ENCODE measurements at regions of chr11 and their contacts with region 1.

Region 1: DNA sequence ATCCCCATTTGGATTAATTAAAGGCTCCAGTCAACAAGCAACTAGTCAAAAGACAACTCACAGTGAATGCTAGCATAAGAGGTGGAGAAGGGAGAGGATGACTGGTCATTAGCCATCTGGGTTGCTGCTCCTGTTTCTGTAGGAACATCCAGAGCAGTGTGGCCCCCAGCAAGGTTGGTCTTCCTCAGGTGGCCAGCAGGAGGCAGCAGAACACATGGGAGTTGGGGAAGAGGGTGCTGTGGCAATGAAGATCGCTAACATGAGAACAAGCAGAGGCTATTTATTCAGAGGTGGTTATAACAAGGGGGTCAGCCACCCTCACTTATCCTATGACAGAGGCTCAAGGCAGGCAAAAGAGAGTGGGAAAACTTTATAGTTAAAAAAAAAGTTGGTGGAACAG is 21.3 kb downstream of the IZUMO1R start:
- DNase-seq: peak; percentile 60 to 65 (median 64)
- ATAC-seq: peak; percentile 95
- H3K4me3 ChIP-seq: no peak overlapping the region
- H3K27ac ChIP-seq: no peak overlapping the region
- H3K4me1 ChIP-seq: no peaks in the 10 kb centered on the region
- H3K27me3 ChIP-seq: peaks cover 4 to 7% of the 10 kb centered on the region in 2 experiments; a peak in 3 of 5 replicates
- CTCF ChIP-seq: peak; percentile 79 to 84 (median 80)
- EP300 ChIP-seq: no peak
- POLR2A ChIP-seq: no peak
- RAD21 ChIP-seq: peak; percentile 83 to 87

Region 2: GRCh38 chr11:93895106-93895862 is 430.4 kb before region 1 on chr11:
- CTCF ChIA-PET with region 1: no interaction called
- POLR2A ChIA-PET with region 1: no interaction called
- in situ Hi-C with region 1: no loop called
- intact Hi-C with region 1: loop called (anchors 10 kb)
- DNase-seq: peak; percentile 41 to 67 (median 46)
- ATAC-seq: peak; percentile 90
- H3K4me3 ChIP-seq: no peak overlapping the region
- H3K27ac ChIP-seq: no peak overlapping the region
- H3K4me1 ChIP-seq: no peaks in the 10 kb centered on the region
- H3K27me3 ChIP-seq: peaks cover 4 to 15% of the 10 kb centered on the region in 2 experiments; a peak in 4 of 5 replicates
- CTCF ChIP-seq: peak; percentile 66 to 88 (median 78)
- EP300 ChIP-seq: no peak
- POLR2A ChIP-seq: no peak
- RAD21 ChIP-seq: peak; percentile 93 to 95

Region 3: DNA sequence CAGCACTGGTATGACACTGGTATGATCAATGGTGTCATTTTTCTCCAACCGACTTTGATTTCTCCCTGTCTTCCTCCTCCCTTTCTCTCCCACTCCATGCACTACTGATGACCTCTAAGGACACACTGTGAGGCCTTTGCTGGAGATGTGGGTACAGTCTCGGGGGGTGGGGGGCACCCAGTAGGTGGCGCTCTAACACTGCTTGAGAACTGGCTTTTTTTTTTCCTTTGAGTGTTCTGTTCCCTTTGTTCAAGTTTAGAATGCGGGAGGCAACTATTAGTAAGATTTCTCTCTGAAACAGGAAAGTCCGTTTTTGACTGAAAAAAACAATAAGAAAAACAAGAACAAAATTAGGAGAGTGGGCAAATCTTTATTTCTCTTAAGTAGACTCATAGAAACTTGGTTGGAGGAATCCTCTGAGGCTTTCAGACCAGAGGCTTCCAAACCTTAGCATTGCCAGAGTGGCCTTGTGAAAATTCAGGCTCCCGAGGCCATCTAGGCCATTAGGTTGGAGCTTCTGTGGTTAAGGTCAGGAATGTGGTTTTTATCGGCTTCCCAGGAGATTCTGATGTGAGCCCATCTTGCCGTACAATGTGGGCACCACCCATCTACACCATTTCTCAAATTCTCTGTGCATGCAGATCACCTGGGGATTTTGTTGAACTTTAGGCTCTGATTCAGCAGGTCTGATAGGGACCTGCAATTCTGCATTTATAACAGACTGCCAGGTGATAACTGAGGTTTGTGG is 153.8 kb before region 1 on chr11:
- CTCF ChIA-PET with region 1: no interaction called
- POLR2A ChIA-PET with region 1: no interaction called
- in situ Hi-C with region 1: no loop called
- intact Hi-C with region 1: loop called (anchors 10 kb)
- DNase-seq: peak; percentile 75 to 84 (median 82)
- ATAC-seq: peak; percentile 96
- H3K4me3 ChIP-seq: no peak overlapping the region
- H3K27ac ChIP-seq: no peak overlapping the region
- H3K4me1 ChIP-seq: no peaks in the 10 kb centered on the region; a peak in 1 of 5 replicates
- H3K27me3 ChIP-seq: no peaks in the 10 kb centered on the region
- CTCF ChIP-seq: peak; percentile 77 to 91 (median 79)
- EP300 ChIP-seq: no peak
- POLR2A ChIP-seq: no peak
- RAD21 ChIP-seq: peak; percentile 50 to 60; a peak in 3 of 4 replicates

Region 4: DNA sequence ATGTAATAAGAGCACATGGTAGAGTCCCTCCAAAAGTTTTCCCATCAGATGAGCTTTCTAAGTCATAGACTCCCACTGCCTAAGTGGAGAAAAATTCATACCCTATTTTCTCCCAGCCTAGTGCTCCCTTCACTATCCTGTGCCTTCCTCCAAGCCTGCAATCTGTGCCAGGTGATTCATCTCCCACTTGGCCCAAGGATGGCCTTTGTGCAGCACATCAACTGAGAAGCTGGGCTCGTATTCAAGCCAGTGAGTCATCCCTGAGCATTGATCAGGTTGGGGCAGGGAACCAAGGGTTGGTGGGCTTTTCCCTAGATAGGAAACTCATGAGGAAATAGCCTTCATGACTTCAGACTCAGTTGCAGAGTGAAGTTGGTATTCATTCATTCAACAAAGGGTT is 132.4 kb before region 1 on chr11:
- CTCF ChIA-PET with region 1: no interaction called
- POLR2A ChIA-PET with region 1: no interaction called
- in situ Hi-C with region 1: no loop called
- intact Hi-C with region 1: no loop called
- DNase-seq: no peak
- ATAC-seq: no peak
- H3K4me3 ChIP-seq: no peak overlapping the region
- H3K27ac ChIP-seq: no peak overlapping the region
- H3K4me1 ChIP-seq: 0 out of 5 replicates have a peak, but pooled peaks cover 0 to 2% of the 10 kb centered on the region in 2 experiments
- H3K27me3 ChIP-seq: peaks cover 11 to 23% of the 10 kb centered on the region in 2 experiments; a peak in 4 of 5 replicates
- CTCF ChIP-seq: no peak
- EP300 ChIP-seq: no peak
- POLR2A ChIP-seq: no peak
- RAD21 ChIP-seq: no peak

Region 5: DNA sequence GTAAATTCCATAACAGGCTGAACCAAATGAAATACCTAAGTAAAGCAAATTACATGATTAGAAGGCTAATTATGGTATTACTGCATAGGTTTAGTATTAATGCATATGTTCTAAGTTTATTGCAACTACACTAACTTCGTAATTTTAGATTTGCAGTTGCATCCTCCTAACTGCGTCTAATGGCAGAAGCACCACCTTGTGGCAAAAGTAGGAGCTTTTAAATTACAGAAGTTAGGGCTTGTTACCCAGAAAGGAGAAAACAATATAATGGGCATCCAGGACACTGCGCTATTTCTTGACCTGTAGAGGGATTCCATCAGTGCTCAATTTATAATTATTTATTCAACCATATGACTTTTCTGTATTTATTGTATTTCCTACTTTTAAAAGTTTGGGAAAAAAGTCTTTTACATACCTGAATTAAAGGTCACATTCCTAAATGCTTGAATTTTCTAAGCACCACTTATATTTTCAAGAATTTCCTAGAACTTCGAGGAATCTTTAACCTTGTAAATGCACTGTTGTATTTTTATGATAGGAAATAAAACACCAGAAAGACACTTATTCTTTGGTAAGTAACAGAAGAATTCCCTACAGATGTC is 91.8 kb after region 1 on chr11:
- CTCF ChIA-PET with region 1: no interaction called
- POLR2A ChIA-PET with region 1: no interaction called
- in situ Hi-C with region 1: no loop called
- intact Hi-C with region 1: loop called (anchors 5 kb)
- DNase-seq: peak in 1 of 4 experiments; percentile 22
- ATAC-seq: peak; percentile 79
- H3K4me3 ChIP-seq: no peak overlapping the region
- H3K27ac ChIP-seq: no peak overlapping the region
- H3K4me1 ChIP-seq: no peaks in the 10 kb centered on the region
- H3K27me3 ChIP-seq: no peaks in the 10 kb centered on the region
- CTCF ChIP-seq: peak; percentile 27 to 54 (median 44); a peak in 4 of 6 replicates
- EP300 ChIP-seq: no peak
- POLR2A ChIP-seq: no peak
- RAD21 ChIP-seq: peak; percentile 79 to 80

Region 6: GRCh38 chr11:94563176-94563847 is 237.6 kb after region 1 on chr11:
- CTCF ChIA-PET with region 1: no interaction called
- POLR2A ChIA-PET with region 1: no interaction called
- in situ Hi-C with region 1: no loop called
- intact Hi-C with region 1: loop called (anchors 5 kb)
- DNase-seq: peak in 2 of 4 experiments; percentile 41 to 52
- ATAC-seq: peak; percentile 70
- H3K4me3 ChIP-seq: no peak overlapping the region
- H3K27ac ChIP-seq: no peak overlapping the region
- H3K4me1 ChIP-seq: peaks cover 5 to 37% of the 10 kb centered on the region in 2 experiments
- H3K27me3 ChIP-seq: no peaks in the 10 kb centered on the region
- CTCF ChIP-seq: peak; percentile 23 to 56 (median 27); a peak in 4 of 6 replicates
- EP300 ChIP-seq: no peak
- POLR2A ChIP-seq: no peak
- RAD21 ChIP-seq: peak; percentile 64 to 80